Calu3 (cell line): ENCODE measurements at regions of chr13 and their contacts with region 1.

Region 1: DNA sequence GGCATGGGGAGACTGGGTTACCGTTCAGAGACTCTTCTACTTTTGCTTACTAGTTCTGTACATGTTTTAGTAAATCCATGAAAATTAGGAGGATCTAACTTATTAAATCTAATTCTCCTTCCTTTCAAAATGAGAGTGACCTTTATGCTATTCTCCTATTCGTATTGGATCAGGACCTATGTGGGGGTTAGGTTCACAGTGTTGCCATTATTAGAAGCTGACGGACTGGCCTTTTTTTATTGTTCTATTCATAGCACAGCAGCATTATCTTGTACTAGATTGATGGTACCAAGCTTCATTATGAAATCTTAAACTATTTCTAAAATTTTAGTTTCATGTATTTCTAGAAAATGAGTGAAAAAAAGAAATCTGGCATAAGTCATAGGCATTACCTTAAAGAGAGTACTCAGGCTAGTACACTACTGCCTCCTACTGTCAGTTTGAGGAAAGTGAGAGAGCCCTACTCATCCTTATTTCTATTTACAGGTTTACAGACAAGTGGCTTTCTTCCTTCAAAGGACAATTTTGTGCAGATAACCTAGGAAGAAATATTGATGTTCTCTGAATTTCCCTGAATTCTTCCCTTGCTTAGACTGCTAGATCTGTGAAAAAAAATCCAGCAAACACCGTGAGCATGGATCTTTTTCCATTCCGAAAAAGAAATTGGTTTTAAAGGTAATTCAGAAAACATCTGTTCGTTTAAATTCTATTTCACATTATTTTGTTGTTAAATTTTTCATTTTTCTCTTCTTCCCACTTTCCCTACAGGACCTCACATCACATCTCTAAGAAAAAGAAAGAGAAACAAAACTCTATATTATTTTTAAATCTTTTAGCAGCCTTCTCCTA is 485.5 kb downstream of the DIAPH3 start:
- DNase-seq: no peak
- H3K4me3 Mint-ChIP-seq: no peak overlapping the region
- H3K27ac Mint-ChIP-seq: no peak overlapping the region
- H3K4me1 Mint-ChIP-seq: no peaks in the 10 kb centered on the region
- H3K27me3 Mint-ChIP-seq: no peaks in the 10 kb centered on the region
- CTCF ChIP-seq: no peak

Region 2: GRCh38 chr13:59112221-59112718 is 565.9 kb before region 1 on chr13:
- CTCF ChIA-PET with region 1: no interaction called
- intact Hi-C with region 1: no loop called
- DNase-seq: no peak
- H3K4me3 Mint-ChIP-seq: no peak overlapping the region
- H3K27ac Mint-ChIP-seq: no peak overlapping the region
- H3K4me1 Mint-ChIP-seq: no peaks in the 10 kb centered on the region
- H3K27me3 Mint-ChIP-seq: no peaks in the 10 kb centered on the region
- CTCF ChIP-seq: no peak

Region 3: GRCh38 chr13:59391696-59392095 is 286.5 kb before region 1 on chr13:
- CTCF ChIA-PET with region 1: interaction called, 3 read pairs
- intact Hi-C with region 1: loop called (anchors 2 kb)
- DNase-seq: peak; percentile 39
- H3K4me3 Mint-ChIP-seq: no peak overlapping the region
- H3K27ac Mint-ChIP-seq: no peak overlapping the region
- H3K4me1 Mint-ChIP-seq: no peaks in the 10 kb centered on the region
- H3K27me3 Mint-ChIP-seq: no peaks in the 10 kb centered on the region
- CTCF ChIP-seq: no peak

Region 4: DNA sequence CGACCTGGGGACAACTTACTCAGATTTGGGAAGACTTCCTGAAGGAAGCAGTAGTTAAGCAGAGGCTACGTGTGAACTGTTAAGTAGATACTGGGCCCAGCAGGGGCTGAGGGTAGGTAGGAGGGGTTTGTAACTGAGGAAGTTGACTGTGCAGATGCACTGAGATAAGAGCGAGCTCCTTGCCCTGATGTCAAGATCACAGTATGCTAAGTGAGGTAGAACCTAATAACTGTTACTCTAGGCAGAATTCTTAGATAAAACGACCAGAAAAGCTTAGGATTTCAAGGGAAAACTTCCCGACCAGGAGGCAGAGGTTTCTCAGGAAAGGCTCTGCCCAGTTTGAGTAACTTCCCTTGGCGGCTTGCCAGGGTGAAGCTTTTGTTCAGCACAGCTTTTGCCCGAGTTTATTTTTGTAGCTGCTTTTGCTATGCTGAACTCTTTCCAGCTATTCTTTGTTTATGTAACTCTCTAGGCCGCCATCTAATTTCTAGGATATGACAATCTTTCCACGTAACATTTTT is 146.6 kb before region 1 on chr13:
- CTCF ChIA-PET with region 1: interaction called, 3 read pairs
- intact Hi-C with region 1: loop called (anchors 10 kb)
- DNase-seq: peak; percentile 21
- H3K4me3 Mint-ChIP-seq: no peak overlapping the region
- H3K27ac Mint-ChIP-seq: no peak overlapping the region
- H3K4me1 Mint-ChIP-seq: no peaks in the 10 kb centered on the region
- H3K27me3 Mint-ChIP-seq: no peaks in the 10 kb centered on the region
- CTCF ChIP-seq: no peak

Region 5: DNA sequence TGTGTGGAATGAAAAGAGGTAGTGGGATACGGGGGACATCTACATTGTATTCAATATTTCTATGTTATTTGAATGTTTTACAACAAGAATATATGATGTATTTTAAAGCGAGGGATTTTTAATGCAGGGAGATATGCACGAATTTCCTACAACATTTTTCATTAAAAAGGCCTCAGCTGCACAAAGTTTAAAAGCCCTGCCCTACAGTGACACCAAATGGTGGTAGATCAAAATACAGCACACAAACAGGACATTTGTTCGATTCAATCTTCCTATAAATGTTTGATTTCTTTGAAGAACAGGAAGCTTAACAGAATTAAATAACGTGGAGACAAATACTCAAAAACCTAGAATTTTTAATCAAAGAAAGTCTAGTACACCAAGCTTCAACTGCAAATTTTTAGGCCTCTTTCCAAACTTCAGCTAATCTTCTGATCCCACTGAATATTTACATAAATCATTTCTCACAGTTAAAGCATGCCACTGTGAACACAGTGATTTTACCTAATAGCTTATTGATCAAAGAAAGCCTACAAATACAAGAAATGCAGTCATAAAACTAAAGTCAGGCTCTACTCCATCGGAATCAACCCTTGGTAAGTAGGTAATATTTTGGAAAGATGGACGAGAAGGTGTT is 228.3 kb after region 1 on chr13:
- CTCF ChIA-PET with region 1: no interaction called
- intact Hi-C with region 1: loop called (anchors 2 kb)
- DNase-seq: peak; percentile 2
- H3K4me3 Mint-ChIP-seq: no peak overlapping the region
- H3K27ac Mint-ChIP-seq: no peak overlapping the region
- H3K4me1 Mint-ChIP-seq: no peaks in the 10 kb centered on the region
- H3K27me3 Mint-ChIP-seq: no peaks in the 10 kb centered on the region
- CTCF ChIP-seq: no peak

Region 6: DNA sequence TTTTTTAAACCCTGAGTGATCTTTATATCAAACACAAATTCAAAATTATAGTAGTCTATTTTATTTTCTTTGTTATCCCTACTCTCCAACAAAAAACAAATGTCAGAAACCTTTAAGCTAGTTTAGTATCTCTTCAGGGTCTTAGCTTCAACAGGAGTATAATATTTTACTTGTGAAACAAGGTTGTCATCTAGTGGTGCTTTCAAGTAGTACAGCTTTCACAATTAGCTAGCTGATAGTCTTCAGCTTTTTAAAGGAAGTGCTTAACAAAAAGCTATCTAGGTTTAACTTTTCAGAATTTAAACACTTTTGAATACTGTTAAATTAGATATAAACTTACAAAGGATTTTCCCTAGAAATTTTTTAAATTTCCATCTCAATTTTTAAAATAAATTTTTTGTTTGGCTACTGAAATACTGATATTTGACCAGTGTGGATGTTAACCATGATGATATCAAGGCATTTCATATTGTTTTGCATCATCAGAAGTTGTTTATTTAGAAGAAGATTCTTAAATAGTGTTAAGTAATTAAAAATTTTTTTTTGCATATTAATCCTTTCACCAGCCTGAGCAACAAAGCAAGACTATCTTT is 753.0 kb after region 1 on chr13:
- CTCF ChIA-PET with region 1: no interaction called
- intact Hi-C with region 1: loop called (anchors 2 kb)
- DNase-seq: peak; percentile 0
- H3K4me3 Mint-ChIP-seq: no peak overlapping the region
- H3K27ac Mint-ChIP-seq: no peak overlapping the region
- H3K4me1 Mint-ChIP-seq: no peaks in the 10 kb centered on the region
- H3K27me3 Mint-ChIP-seq: no peaks in the 10 kb centered on the region
- CTCF ChIP-seq: no peak